GM10248 (cell line): ENCODE measurements at regions of chr2 and their contacts with region 1.

Region 1: GRCh38 chr2:162221064-162221463 is 22.2 kb downstream of the FAP start:
- DNase-seq: peak; percentile 65
- CTCF ChIP-seq: peak; percentile 93

Region 2: DNA sequence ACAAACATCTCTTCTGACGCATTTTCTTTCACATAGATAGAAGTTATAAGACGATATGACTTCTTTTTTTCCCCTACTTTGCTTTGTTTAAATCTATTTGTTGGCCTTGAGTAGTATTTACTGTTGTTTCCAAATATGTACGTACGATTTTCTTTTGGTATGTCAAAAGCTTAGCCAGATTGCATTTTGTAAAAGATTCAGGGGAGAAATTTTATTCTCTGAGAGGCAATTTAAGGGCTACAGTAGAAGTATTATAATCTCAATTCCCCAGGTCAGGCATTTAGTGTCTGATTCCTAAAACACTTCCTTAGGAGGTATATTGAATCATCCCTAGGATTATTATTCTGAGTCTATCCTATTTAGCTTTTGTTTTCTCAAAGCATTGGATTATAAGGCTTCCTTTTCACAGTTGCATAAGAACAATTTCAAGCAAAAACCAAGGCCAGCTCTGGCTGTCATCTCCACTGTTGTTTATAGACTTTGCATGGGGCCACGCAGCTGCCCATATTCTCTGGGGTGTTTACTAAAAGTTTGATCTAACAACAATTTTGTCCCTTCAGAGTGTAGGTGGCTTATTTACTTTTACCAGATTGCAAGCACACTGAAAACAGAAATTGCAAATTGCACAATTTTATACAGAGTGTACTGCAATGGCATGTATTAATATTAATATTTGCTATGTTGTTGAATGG is 35.4 kb before region 1 on chr2:
- CTCF ChIA-PET with region 1: no interaction called
- POLR2A ChIA-PET with region 1: no interaction called
- DNase-seq: no peak
- CTCF ChIP-seq: no peak

Region 3: DNA sequence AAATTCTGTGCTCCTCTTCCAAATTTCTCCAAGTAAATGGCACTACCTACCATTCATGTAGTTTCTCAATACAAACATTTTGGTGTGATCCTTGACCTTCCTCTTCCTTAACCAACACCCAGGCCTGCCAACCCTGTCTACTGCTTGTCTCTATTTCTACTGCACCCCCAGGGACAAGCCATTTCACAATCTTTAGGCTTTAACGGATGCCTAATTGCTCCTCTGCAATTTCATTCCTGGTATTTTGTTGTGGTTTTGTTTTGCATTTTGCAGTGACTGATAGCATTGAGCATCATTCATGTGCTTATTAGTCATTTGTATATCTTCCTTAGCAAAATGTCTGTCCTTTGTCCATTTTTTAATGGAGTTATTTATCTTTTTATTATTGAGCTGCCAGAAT is 12.1 kb after region 1 on chr2:
- CTCF ChIA-PET with region 1: interaction called, 85 read pairs
- POLR2A ChIA-PET with region 1: no interaction called
- DNase-seq: no peak
- CTCF ChIP-seq: no peak

Region 4: GRCh38 chr2:162261032-162261945 is 40.2 kb after region 1 on chr2:
- CTCF ChIA-PET with region 1: interaction called, 15 read pairs
- POLR2A ChIA-PET with region 1: no interaction called
- DNase-seq: peak; percentile 9
- CTCF ChIP-seq: no peak

Region 5: GRCh38 chr2:162308752-162309503 is 87.9 kb after region 1 on chr2:
- CTCF ChIA-PET with region 1: interaction called, 210 read pairs
- POLR2A ChIA-PET with region 1: no interaction called
- DNase-seq: no peak
- CTCF ChIP-seq: no peak